Activated B cell treated with CpG ODN at 0.5 μM for 24 hours (primary cell): ENCODE measurements at regions of chr3 and their contacts with region 1.

Region 1: DNA sequence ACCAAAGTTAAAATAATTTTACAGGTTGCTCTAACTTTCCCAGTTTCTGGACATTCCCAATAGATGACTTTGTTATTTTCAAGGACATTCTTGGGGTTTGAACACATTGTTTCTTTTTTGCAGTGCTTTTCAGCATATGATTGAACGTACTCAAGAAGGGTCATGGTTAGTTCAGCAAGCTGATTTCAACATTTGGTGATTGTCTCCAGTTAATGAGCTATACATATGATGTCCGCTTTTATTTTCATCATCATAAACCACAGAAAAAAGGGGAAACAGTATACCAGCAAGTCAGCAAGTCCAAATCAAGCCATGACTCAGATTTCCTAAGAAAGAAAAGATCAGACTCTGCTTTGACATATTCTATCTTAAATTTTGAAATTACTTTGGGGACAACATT is 69.4 kb downstream of the B3GALNT1 start:
- DNase-seq: no peak
- ATAC-seq: peak; percentile 47
- H3K4me3 Mint-ChIP-seq: peak overlapping the region; percentile 54
- H3K27ac Mint-ChIP-seq: no peak overlapping the region
- H3K4me1 Mint-ChIP-seq: peaks cover 19% of the 10 kb centered on the region
- H3K27me3 Mint-ChIP-seq: no peaks in the 10 kb centered on the region
- CTCF ChIP-seq: no peak

Region 2: GRCh38 chr3:161104561-161105551 is 69.1 kb after region 1 on chr3 and contains the start of gene B3GALNT1:
- CTCF ChIA-PET with region 1: no interaction called
- POLR2A ChIA-PET with region 1: no interaction called
- intact Hi-C with region 1: loop called (anchors 5 kb)
- DNase-seq: peak; percentile 39
- ATAC-seq: peak; percentile 85
- H3K4me3 Mint-ChIP-seq: peak within 1 kb of the TSS; percentile 82
- H3K27ac Mint-ChIP-seq: no peak within 1 kb of the TSS
- H3K4me1 Mint-ChIP-seq: peaks cover 12% of the 10 kb centered on the region
- H3K27me3 Mint-ChIP-seq: peaks cover 8% of the 10 kb centered on the region
- CTCF ChIP-seq: no peak
- total RNA-seq, gene B3GALNT1: 4.6 and 8.5 TPM in 2 replicates

Region 3: DNA sequence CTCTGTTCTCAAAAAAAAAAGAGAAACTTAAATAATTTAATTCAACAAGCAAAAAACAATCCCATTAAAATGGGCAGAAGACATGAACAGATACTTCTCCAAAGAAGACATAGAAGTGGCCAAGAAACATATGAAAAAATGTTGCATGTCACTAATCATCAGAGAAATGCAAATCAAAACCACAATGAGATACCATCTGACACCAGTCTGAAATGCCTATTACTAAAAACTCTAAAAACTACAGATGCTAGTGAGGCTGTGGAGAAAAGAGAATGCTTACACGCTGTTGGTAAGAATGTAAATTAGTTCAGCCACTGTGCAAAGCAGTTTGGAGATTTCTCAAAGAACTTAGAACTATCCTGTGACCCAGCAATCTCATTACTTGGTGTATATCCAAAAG is 843.8 kb after region 1 on chr3:
- CTCF ChIA-PET with region 1: no interaction called
- POLR2A ChIA-PET with region 1: no interaction called
- intact Hi-C with region 1: no loop called
- DNase-seq: no peak
- ATAC-seq: no peak
- H3K4me3 Mint-ChIP-seq: no peak overlapping the region
- H3K27ac Mint-ChIP-seq: no peak overlapping the region
- H3K4me1 Mint-ChIP-seq: no peaks in the 10 kb centered on the region
- H3K27me3 Mint-ChIP-seq: no peaks in the 10 kb centered on the region
- CTCF ChIP-seq: no peak